Aorta (tissue), 5 donors: ENCODE measurements at regions of chr12 and their contacts with region 1.

Region 1: GRCh38 chr12:53251477-53252348 is 16.4 kb upstream of the ESPL1 start:
- DNase-seq: peak; percentile 82 to 92
- ATAC-seq: peak; percentile 95
- H3K4me3 ChIP-seq: peak overlapping the region; percentile 64 to 98
- H3K27ac ChIP-seq: peak overlapping the region in 1 of 2 donors; percentile 82
- H3K4me1 ChIP-seq: no peaks in the 10 kb centered on the region
- H3K27me3 ChIP-seq: no peaks in the 10 kb centered on the region

Region 2: DNA sequence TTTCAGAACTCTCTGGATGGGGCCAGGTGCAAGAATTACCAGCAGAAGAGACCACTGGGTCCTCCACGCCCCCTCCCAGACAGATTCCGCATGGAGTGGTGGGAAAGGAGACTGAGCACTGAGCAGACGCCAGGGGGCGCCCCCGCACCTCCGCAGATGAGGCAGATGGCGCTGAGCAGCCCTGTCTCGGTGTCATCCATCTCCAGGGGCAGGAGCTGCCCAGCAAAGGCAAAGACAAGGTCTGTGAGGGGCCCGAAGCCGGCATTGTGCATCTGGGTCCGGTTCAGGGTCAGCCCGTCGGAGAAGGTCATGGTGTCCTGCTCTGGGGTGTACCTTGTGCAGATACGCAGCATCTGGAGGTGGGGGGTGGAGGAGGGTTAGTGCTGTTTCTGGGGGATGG is 38.4 kb before region 1 on chr12:
- intact Hi-C with region 1: loop called (anchors 2 kb)
- DNase-seq: peak; percentile 89 to 94
- ATAC-seq: peak; percentile 79
- H3K4me3 ChIP-seq: no peak overlapping the region
- H3K27ac ChIP-seq: no peak overlapping the region
- H3K4me1 ChIP-seq: no peaks in the 10 kb centered on the region
- H3K27me3 ChIP-seq: no peaks in the 10 kb centered on the region

Region 3: DNA sequence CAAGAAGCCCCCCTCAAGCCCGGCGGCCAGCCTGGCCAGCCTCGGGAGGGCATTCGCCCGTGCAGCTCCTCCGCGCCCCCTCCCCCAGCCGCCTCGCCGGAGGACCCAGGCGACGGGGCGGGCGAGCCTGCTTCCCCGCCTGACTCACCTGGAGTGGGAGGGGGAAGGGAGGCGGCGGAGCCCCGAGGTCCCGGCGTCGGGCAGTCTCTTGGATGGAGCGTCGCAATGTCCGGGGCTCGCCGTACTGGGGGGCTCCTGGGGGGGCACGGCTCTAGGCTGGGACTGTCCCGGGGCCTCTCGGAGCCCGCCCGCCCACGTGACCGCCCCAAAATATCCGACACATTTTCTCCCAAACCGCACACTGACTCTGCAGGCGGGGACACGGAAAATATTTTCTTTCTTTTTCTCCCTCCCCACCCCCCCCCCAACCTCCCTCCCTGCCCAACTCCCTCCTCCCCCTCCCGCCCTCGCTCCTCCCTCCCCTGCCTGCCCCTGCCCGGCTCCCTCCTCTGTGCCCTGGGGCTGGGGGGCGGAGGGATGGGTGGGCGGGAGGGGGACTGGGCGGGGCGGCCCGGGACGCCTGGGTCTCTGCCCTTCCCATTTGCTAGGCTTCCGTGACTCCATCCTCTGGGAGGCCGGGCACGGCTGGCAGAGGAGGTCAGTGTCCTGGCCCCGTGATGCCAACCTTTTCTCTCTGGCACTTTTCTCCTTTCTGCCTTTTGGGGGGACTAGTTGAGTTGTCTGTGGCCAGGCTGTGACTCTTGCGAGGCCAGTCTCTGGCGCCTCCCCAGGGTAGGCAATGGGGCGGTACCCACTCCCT is 19.7 kb before region 1 on chr12 and contains the start of gene RARG:
- intact Hi-C with region 1: loop called in 1 of 2 experiments (anchors 2 kb)
- DNase-seq: peak; percentile 84 to 92
- ATAC-seq: peak; percentile 88
- H3K4me3 ChIP-seq: peak within 1 kb of the TSS; percentile 55 to 84
- H3K27ac ChIP-seq: peak within 1 kb of the TSS; percentile 79 to 91
- H3K4me1 ChIP-seq: peaks cover 0 to 6% of the 10 kb centered on the region in 2 donors
- H3K27me3 ChIP-seq: no peaks in the 10 kb centered on the region
- total RNA-seq, gene RARG: 32.7 to 63.9 TPM

Region 4: GRCh38 chr12:53287741-53288216 is 36.1 kb after region 1 on chr12:
- intact Hi-C with region 1: loop called in 1 of 2 experiments (anchors 5 kb)
- DNase-seq: peak; percentile 66 to 91
- ATAC-seq: peak; percentile 63
- H3K4me3 ChIP-seq: no peak overlapping the region
- H3K27ac ChIP-seq: no peak overlapping the region
- H3K4me1 ChIP-seq: no peaks in the 10 kb centered on the region
- H3K27me3 ChIP-seq: no peaks in the 10 kb centered on the region